GM10248 (cell line): ENCODE measurements at regions of chr4 and their contacts with region 1.

Region 1: GRCh38 chr4:139167774-139168444 is 9.1 kb downstream of the ELF2 start:
- DNase-seq: no peak
- CTCF ChIP-seq: peak; percentile 26

Region 2: GRCh38 chr4:139129206-139129605 is 38.7 kb before region 1 on chr4:
- CTCF ChIA-PET with region 1: no interaction called
- POLR2A ChIA-PET with region 1: no interaction called
- DNase-seq: no peak
- CTCF ChIP-seq: no peak

Region 3: DNA sequence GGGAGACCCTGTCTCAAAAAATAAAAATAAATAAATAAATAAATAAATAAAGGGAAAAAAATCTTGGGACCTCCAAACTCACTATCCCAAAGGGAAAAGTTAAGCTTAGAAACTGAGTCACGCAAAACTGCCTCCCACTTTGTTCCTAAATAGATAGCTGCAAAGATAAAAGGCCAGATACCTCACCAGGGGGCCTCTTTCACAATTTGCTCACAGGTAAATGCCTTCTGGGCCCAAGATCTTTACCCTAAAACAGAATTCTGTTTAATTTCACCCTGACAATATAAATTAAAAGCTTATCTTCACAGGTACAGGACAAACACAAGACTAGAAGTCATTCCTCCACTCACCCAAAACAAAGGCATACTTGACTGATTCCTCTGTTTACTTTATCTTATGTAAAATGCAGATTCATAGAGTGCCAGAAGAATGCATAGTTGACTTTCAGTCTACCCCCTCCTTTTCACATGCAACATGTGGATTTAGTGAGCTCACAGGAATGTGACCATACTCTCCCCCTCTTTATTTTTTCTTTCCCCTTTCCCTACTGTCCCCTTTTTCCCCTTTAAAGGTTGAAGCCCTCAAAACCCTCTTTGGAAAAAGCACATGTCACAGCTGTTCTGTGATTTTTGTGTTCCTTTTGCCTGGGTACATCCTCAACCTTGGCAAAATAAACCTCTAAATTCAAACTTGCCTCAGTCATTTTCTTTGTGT is 14.3 kb before region 1 on chr4:
- CTCF ChIA-PET with region 1: interaction called, 10 read pairs
- POLR2A ChIA-PET with region 1: no interaction called
- DNase-seq: no peak
- CTCF ChIP-seq: no peak

Region 4: DNA sequence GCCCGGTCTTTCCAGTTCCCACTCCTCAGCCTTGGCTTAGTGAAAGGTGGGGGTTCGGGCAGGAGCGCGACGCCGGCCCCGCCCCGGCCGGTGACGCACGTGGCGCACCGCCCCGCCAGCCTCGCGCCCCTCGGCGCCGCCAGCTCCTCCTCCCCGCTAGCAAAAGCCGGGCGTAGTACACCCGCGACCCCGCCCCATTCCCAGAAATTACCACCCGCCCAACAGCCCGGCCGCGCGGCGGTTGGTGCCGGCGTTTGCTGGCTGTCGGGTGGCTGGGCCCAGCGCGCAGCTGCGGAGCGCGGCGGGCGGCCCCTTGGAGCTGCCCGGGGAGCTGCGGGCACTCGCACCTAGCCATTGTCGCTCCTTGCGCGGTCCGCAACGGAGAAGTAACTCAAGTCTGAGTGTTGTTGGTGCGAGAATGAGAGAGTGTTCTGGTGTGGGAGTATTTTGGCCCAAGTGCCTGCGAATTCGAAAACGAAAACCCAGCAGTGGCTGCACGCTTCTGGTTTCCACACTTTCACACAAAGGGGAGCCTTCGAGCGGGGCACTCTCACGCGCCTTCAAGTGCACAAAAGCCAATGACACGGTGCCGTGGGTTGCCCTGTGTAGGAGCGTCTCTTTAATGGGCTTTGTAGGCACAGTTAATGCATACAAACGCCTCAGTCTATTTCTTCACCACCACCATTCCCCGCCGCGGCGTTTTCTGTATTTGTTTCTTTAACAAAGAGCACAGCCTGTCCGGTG is 10.1 kb after region 1 on chr4:
- CTCF ChIA-PET with region 1: interaction called, 11 read pairs
- POLR2A ChIA-PET with region 1: interaction called, 5 read pairs
- DNase-seq: peak; percentile 90
- CTCF ChIP-seq: no peak

Region 5: GRCh38 chr4:139282065-139282720 is 114.3 kb after region 1 on chr4:
- CTCF ChIA-PET with region 1: no interaction called
- POLR2A ChIA-PET with region 1: no interaction called
- DNase-seq: no peak
- CTCF ChIP-seq: no peak